ENCODE measurements at regions of chr3 and their contacts with region 1.

Region 1: DNA sequence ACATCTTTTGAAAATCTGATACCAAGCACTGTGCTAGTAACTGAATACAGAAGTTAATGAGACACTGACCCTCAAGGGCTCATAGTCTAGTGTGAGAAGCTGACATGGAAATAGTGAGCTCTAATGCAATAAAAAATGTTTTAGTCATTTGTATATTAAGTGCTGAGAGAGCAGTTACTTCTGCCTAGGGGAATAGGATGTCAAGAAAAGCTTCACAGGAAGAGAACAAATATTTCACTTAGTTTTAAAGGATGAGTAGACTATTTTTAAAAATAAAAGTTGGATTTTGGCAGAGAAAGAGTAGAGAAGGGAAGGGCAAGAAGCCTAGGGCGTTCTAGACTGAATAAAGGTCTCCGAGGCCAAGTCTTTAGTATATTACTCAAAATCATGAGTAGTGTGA is 158.4 kb downstream of the ATG7 start:
- DNase-seq: no peak
- ATAC-seq: no peak
- H3K4me3 ChIP-seq: no peak overlapping the region
- H3K27ac ChIP-seq: no peak overlapping the region; the same call in 1 of the 2 replicates
- H3K4me1 ChIP-seq: no peaks in the 10 kb centered on the region; the same call in 1 of the 2 replicates
- H3K27me3 ChIP-seq: no peaks in the 10 kb centered on the region
- CTCF ChIP-seq: no peak

Region 2: DNA sequence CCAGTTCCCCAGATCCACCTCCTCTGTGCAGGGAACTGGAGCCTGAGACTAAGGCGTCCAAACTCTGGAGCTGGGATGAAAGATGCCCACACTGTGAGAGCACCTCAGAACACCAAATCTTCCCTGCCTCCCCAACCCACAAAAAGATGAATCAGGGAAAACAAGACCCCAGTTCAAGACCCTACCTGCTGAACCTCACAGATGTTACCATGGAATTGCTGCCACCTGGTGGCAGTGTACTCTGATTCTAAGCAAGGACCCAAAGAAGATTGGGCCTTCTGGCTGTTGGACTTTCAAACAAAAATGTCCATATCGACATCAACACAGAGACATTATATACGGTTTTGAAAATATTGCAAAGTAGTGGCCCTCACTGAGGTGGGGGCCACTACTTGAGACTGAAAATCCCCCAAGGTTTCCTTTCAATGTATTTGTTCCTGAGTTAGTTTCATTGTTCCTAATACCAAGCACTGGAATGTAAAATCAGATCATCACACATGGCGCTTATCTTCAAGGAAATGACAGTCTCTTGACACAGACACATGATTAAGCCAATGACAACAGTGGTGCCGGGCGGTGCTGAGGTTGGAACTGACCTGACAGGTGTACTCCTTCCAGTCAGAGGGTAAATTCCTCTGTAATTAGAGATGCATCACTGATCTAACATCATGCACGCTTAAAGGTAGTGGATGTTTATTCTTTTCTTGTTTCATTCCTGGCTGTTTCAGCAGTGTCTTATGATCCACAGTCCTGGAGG is 547.0 kb before region 1 on chr3:
- CTCF ChIA-PET with region 1: no interaction called
- POLR2A ChIA-PET with region 1: no interaction called
- in situ Hi-C with region 1: no loop called
- intact Hi-C with region 1: no loop called
- DNase-seq: no peak
- ATAC-seq: no peak
- H3K4me3 ChIP-seq: no peak overlapping the region
- H3K27ac ChIP-seq: no peak overlapping the region
- H3K4me1 ChIP-seq: no peaks in the 10 kb centered on the region
- H3K27me3 ChIP-seq: peaks cover 14% of the 10 kb centered on the region
- CTCF ChIP-seq: peak; percentile 68

Region 3: GRCh38 chr3:11045536-11045935 is 385.1 kb before region 1 on chr3:
- CTCF ChIA-PET with region 1: no interaction called
- POLR2A ChIA-PET with region 1: no interaction called
- in situ Hi-C with region 1: no loop called
- intact Hi-C with region 1: no loop called
- DNase-seq: no peak
- ATAC-seq: no peak
- H3K4me3 ChIP-seq: no peak overlapping the region
- H3K27ac ChIP-seq: no peak overlapping the region
- H3K4me1 ChIP-seq: no peaks in the 10 kb centered on the region
- H3K27me3 ChIP-seq: peaks cover 2% of the 10 kb centered on the region; the same call in 1 of the 2 replicates
- CTCF ChIP-seq: no peak

Region 4: DNA sequence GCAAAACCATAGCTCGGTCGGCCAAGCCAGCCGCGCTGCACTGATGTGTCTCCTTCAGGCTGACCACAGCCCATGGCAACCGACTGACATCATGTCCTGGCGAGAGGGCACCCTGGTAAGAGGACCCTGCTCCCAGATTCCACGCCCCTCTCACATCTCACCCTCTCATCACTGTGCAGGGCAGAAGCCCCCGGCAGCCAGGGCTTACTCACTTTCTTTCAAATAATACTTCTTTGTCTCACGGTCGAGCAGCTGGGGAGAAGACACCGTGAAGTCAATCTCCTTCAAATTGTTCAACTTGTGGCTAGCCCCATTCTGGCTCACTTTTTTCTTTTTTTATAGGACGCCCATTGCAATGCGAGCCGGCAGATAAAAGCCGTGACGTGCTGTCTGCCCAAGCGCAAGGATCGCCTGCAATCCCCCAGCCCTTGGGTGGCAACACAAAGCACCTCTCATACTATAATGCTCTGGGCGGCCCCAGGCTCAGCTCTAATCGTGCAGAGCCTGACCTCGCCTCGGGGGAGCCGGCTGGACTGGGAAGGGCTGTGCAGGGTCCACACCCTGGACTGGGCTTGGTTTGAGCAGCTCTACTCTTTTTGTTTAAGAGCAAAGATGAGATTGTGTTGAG is 179.5 kb after region 1 on chr3:
- CTCF ChIA-PET with region 1: no interaction called
- POLR2A ChIA-PET with region 1: interaction called, 10 read pairs
- in situ Hi-C with region 1: no loop called
- intact Hi-C with region 1: no loop called
- DNase-seq: no peak
- ATAC-seq: peak; percentile 71
- H3K4me3 ChIP-seq: peak overlapping the region; percentile 3 to 30; a peak in 2 of 4 replicates
- H3K27ac ChIP-seq: peak overlapping the region; percentile 97
- H3K4me1 ChIP-seq: peaks cover 95% of the 10 kb centered on the region
- H3K27me3 ChIP-seq: no peaks in the 10 kb centered on the region
- CTCF ChIP-seq: no peak

Region 5: DNA sequence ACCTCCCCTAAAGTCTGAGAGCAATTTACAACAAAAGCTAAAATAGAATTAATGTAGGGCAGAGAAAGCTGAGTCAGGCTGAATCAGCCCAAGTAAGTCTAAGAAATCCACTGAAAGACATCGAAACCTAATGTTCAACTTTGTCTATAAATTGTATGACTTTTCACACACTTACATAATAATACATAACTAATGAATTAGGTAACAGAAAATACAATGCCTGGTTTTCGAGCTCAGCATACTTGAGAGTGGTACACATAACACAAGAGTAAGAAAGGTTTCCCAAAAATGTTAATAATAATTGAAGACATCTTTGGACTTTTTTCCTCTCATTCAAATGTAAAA is 268.4 kb after region 1 on chr3:
- CTCF ChIA-PET with region 1: no interaction called
- POLR2A ChIA-PET with region 1: no interaction called
- in situ Hi-C with region 1: no loop called
- intact Hi-C with region 1: no loop called
- DNase-seq: no peak
- ATAC-seq: no peak
- H3K4me3 ChIP-seq: no peak overlapping the region
- H3K27ac ChIP-seq: no peak overlapping the region
- H3K4me1 ChIP-seq: no peaks in the 10 kb centered on the region
- H3K27me3 ChIP-seq: no peaks in the 10 kb centered on the region
- CTCF ChIP-seq: no peak

Region 6: DNA sequence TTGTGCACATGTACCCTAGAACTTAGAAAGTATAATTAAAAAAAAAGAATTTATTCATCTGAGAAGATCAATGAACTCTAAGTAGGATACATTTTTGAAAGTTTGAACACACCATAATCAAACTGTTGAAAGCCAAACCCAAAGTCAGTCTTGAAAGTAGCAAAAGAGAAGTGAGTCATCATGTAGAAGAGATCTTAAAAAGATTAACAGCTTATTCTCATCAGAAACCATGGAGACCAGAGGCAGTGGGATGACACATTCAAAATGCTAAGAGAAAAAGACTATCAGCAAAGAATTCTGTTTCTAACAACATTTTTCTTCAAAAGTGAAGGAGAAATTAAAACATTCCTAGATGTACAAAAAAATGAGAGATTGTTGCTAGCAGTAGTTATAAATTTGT is 667.3 kb after region 1 on chr3:
- CTCF ChIA-PET with region 1: no interaction called
- POLR2A ChIA-PET with region 1: no interaction called
- in situ Hi-C with region 1: no loop called
- intact Hi-C with region 1: no loop called
- DNase-seq: no peak
- ATAC-seq: no peak
- H3K4me3 ChIP-seq: no peak overlapping the region
- H3K27ac ChIP-seq: no peak overlapping the region
- H3K4me1 ChIP-seq: no peaks in the 10 kb centered on the region
- H3K27me3 ChIP-seq: no peaks in the 10 kb centered on the region
- CTCF ChIP-seq: no peak